Endothelial cell of umbilical vein (primary cell): ENCODE measurements at regions of chr16 and their contacts with region 1.

Region 1: GRCh38 chr16:55830658-55831294 is 2.1 kb downstream of the CES1 start:
- DNase-seq: no peak
- H3K4me3 ChIP-seq: no peak overlapping the region
- H3K27ac ChIP-seq: no peak overlapping the region
- H3K4me1 ChIP-seq: no peaks in the 10 kb centered on the region
- H3K27me3 ChIP-seq: no peaks in the 10 kb centered on the region
- CTCF ChIP-seq: no peak
- POLR2A ChIP-seq: no peak

Region 2: GRCh38 chr16:55760310-55761001 is 70.3 kb before region 1 on chr16:
- CTCF ChIA-PET with region 1: no interaction called
- POLR2A ChIA-PET with region 1: no interaction called
- dilution Hi-C with region 1: no loop called
- intact Hi-C with region 1: loop called (anchors 2 kb)
- DNase-seq: no peak
- H3K4me3 ChIP-seq: no peak overlapping the region
- H3K27ac ChIP-seq: no peak overlapping the region
- H3K4me1 ChIP-seq: no peaks in the 10 kb centered on the region
- H3K27me3 ChIP-seq: no peaks in the 10 kb centered on the region
- CTCF ChIP-seq: no peak
- POLR2A ChIP-seq: no peak

Region 3: DNA sequence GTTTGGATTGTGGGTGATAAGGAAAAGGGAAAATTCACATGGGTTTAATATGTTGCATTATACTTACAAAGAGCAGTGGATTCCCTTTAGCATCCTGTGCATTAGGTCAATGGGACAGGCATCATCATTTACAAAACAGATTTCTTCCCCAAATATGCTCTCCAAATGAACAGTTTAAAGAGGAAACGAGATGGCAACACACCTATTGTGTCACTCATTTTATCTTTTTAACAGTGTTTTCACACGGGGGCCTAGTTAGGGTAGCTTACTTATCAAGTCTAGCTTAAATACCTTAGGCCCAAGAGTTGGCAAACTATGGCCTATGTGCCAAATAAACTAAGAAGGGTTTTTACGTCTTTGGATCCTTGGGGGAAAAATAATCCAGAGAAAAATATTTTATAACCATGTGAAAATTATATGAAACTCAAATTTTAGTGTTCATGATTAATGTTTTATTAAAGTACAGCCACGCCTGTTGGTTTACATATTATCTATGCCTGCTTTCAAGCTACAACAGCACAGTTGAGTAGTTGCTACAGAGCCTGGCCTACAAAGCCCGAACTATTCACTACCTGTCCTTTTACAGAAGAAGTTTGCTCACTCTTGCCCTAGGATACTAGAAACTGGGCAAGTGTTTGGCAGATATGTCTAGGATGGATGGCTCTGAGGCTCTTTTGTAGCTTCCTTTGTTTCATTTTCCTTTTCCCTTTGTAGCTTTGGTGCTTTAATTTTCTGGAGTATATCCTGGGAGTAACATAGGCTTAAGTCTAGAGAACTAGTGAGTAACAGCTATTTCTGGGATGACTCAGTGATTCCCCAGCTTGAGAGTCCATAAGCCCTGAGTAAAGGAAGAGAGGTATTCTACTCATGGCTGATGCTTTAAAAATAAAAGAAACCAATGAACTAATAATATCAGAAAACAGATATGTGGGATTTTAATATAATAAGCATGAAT is 911.5 kb after region 1 on chr16:
- CTCF ChIA-PET with region 1: no interaction called
- POLR2A ChIA-PET with region 1: no interaction called
- dilution Hi-C with region 1: no loop called
- intact Hi-C with region 1: no loop called
- DNase-seq: peak; percentile 49
- H3K4me3 ChIP-seq: no peak overlapping the region
- H3K27ac ChIP-seq: peak overlapping the region; percentile 12
- H3K4me1 ChIP-seq: peaks cover 15% of the 10 kb centered on the region
- H3K27me3 ChIP-seq: no peaks in the 10 kb centered on the region
- CTCF ChIP-seq: no peak
- POLR2A ChIP-seq: no peak